ENCODE measurements at regions of chr12 and their contacts with region 1.

Region 1: DNA sequence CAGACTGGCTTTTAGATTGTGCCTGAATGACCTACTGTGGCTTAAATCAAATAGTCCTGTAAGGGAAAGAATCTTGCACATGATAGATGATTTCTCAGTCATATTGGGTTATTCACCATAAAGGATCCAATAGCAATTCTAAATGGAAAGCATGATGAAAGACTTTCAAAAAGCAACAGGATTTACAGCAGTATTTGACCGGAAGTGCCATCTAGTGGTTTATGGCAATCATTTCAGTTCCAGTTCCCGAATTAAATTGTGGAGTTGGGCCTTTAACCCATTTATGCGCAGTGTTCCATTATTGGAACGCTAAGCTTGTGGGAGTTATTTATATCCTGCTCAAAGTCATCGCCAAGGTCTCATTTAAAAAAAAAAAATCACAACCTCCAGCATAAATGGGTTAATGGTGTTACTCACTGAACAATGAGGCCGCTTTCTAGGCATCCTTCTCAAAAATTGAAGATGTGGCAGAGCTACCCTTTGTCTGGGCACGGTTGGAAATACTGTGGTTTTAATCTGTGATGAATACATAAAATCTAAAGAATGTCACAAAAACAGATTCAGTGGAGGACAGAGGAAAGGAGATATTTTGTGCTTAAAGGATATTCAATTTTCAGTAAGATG is 60.8 kb upstream of the REP15 start:
- DNase-seq: peak; percentile 20
- CTCF ChIP-seq: peak; percentile 35

Region 2: GRCh38 chr12:27623645-27624044 is 11.8 kb before region 1 on chr12:
- CTCF ChIA-PET with region 1: interaction called, 12 read pairs
- POLR2A ChIA-PET with region 1: no interaction called
- DNase-seq: no peak
- CTCF ChIP-seq: no peak

Region 3: GRCh38 chr12:27667540-27667939 is 32.1 kb after region 1 on chr12:
- CTCF ChIA-PET with region 1: no interaction called
- POLR2A ChIA-PET with region 1: no interaction called
- DNase-seq: no peak
- CTCF ChIP-seq: no peak

Measured in GM10248 (cell line).